ENCODE measurements at regions of chr13 and their contacts with region 1.

Region 1: DNA sequence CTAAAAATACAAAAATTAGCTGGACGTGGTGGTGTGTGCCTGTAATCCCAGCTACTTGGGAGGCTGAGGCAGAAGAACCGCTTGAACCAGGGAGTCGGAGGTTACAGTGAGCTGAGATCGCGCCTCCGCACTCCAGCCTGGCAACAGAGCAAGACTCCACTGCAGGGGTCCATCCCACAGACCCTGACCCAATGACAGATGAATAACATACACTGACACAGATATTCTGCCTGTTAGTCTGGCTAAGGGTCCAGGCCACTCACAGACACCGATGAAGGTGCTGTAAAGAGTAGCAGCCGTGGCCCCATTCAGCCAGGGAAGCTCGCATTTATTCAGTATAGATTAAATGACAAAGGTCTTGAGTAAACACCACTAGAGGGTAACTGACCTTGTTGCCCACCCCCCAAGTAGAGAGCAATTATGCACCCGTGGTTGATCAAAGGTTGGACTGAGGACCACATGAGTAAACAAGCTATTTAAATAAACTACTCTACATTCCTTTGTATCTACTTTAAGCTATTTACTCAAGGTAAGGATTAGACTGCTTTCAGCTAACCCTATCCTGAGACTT is 8.5 kb upstream of the CRYL1 start:
- DNase-seq: no peak
- H3K4me3 ChIP-seq: no peak overlapping the region
- H3K27ac ChIP-seq: no peak overlapping the region
- H3K27me3 ChIP-seq: no peaks in the 10 kb centered on the region
- CTCF ChIP-seq: no peak

Region 2: GRCh38 chr13:20713751-20714150 is 179.6 kb after region 1 on chr13:
- CTCF ChIA-PET with region 1: interaction called, 15 read pairs
- POLR2A ChIA-PET with region 1: no interaction called
- DNase-seq: no peak
- H3K4me3 ChIP-seq: no peak overlapping the region
- H3K27ac ChIP-seq: peak overlapping the region; percentile 12
- H3K27me3 ChIP-seq: peaks cover 2% of the 10 kb centered on the region
- CTCF ChIP-seq: no peak

Measured in AG04450 (cell line).